Naive thymus-derived CD4-positive, alpha-beta T cell (primary cell): ENCODE measurements at regions of chr2 and their contacts with region 1.

Region 1: GRCh38 chr2:135709992-135710391 is 31.7 kb upstream of the UBXN4 start:
- DNase-seq: peak; percentile 37 to 82 (median 69)
- ATAC-seq: peak; percentile 80
- H3K4me3 ChIP-seq: no peak overlapping the region
- H3K4me3 Mint-ChIP-seq: no peak overlapping the region
- H3K27ac ChIP-seq: no peak overlapping the region
- H3K27ac Mint-ChIP-seq: peak overlapping the region in 2 of 9 donors; percentile 3 to 16
- H3K4me1 ChIP-seq: no peaks in the 10 kb centered on the region
- H3K4me1 Mint-ChIP-seq: peaks cover 0 to 4% (median 0%) of the 10 kb centered on the region in 7 donors
- H3K27me3 ChIP-seq: no peaks in the 10 kb centered on the region
- H3K27me3 Mint-ChIP-seq: no peaks in the 10 kb centered on the region

Region 2: GRCh38 chr2:134988994-134989605 is 720.9 kb before region 1 on chr2:
- CTCF ChIA-PET with region 1: interaction called, 18 read pairs
- POLR2A ChIA-PET with region 1: interaction called, 3 read pairs
- intact Hi-C with region 1: loop called (anchors 1 to 5 kb)
- DNase-seq: peak in 5 of 9 donors; percentile 13 to 35 (median 23)
- ATAC-seq: no peak
- H3K4me3 ChIP-seq: no peak overlapping the region
- H3K4me3 Mint-ChIP-seq: no peak overlapping the region
- H3K27ac ChIP-seq: no peak overlapping the region
- H3K27ac Mint-ChIP-seq: no peak overlapping the region
- H3K4me1 ChIP-seq: no peaks in the 10 kb centered on the region
- H3K4me1 Mint-ChIP-seq: no peaks in the 10 kb centered on the region
- H3K27me3 ChIP-seq: no peaks in the 10 kb centered on the region
- H3K27me3 Mint-ChIP-seq: peaks cover 0 to 22% (median 14%) of the 10 kb centered on the region in 5 donors

Region 3: GRCh38 chr2:135149251-135149650 is 560.7 kb before region 1 on chr2:
- CTCF ChIA-PET with region 1: no interaction called
- POLR2A ChIA-PET with region 1: no interaction called
- intact Hi-C with region 1: loop called in 1 of 2 experiments (anchors 10 kb)
- DNase-seq: no peak
- ATAC-seq: no peak
- H3K4me3 ChIP-seq: no peak overlapping the region
- H3K4me3 Mint-ChIP-seq: no peak overlapping the region
- H3K27ac ChIP-seq: no peak overlapping the region
- H3K27ac Mint-ChIP-seq: peak overlapping the region in 1 of 9 donors; percentile 55
- H3K4me1 ChIP-seq: no peaks in the 10 kb centered on the region
- H3K4me1 Mint-ChIP-seq: peaks cover 5 to 26% (median 21%) of the 10 kb centered on the region in 7 donors
- H3K27me3 ChIP-seq: no peaks in the 10 kb centered on the region
- H3K27me3 Mint-ChIP-seq: no peaks in the 10 kb centered on the region

Region 4: DNA sequence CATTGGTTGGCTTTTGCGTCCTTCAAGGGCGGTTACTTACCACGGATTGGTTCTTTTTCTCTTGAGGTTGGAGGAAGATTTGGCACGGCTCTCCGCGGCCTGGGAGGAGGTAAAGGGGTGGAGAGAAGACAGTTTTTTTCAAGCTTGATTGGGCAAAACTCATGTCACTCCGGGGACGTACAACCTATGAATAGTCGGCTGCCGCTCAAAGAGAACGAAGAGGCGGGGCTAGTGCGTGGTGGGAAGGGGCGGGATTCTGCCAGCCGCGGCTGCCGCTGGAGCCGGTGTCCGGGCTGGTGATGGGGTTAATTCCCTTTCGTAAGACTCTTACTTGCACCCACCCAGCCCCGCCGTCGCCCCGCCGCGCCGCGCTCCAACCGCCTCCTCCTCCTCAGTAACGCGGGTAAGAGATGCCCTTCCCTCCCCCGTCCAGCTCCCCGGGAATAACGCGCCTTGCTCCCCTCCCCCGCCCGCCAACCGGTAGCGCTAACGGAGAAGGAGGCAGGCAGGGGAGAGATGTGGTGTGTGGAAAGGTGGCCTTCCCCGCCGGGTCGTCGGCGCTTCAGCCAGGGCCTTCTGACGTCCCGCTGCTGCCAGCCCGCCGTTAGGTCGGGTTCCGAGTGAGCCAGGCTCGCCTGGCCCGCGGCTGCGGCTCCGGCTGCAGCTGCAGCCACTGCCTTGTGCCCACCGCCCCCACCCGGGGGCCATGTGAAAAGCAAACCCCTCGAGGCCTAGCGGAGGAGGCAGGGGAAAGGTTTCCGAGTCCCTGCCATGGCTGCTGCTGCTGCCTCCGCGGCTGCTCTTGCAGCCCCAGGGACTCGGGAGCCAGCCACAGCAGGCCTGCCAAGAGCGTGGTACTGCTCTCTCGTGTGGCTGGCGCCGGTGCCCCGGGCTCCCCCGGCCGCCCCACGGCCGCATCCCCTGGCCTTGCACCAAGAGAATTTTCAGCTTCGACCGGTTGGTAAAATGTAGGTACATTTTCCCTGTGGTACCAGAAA is 178.5 kb before region 1 on chr2 and contains the start of gene R3HDM1:
- CTCF ChIA-PET with region 1: no interaction called
- POLR2A ChIA-PET with region 1: no interaction called
- intact Hi-C with region 1: loop called (anchors 1 kb)
- DNase-seq: peak in 8 of 9 donors; percentile 71 to 99 (median 98)
- ATAC-seq: peak; percentile 89
- H3K4me3 ChIP-seq: peak within 1 kb of the TSS; percentile 83
- H3K4me3 Mint-ChIP-seq: no peak within 1 kb of the TSS
- H3K27ac ChIP-seq: peak within 1 kb of the TSS; percentile 84
- H3K27ac Mint-ChIP-seq: peak within 1 kb of the TSS in 7 of 9 donors; percentile 36 to 81 (median 67)
- H3K4me1 ChIP-seq: peaks cover 4 to 21% of the 10 kb centered on the region in 2 donors
- H3K4me1 Mint-ChIP-seq: peaks cover 10 to 39% (median 34%) of the 10 kb centered on the region in 7 donors
- H3K27me3 ChIP-seq: no peaks in the 10 kb centered on the region
- H3K27me3 Mint-ChIP-seq: no peaks in the 10 kb centered on the region
- total RNA-seq, gene R3HDM1: 35.0 to 58.2 (median 47.0) TPM

Region 5: GRCh38 chr2:135637456-135638087 is 72.4 kb before region 1 on chr2:
- CTCF ChIA-PET with region 1: interaction called, 3 read pairs
- POLR2A ChIA-PET with region 1: no interaction called
- intact Hi-C with region 1: loop called in 1 of 2 experiments (anchors 5 kb)
- DNase-seq: no peak
- ATAC-seq: no peak
- H3K4me3 ChIP-seq: no peak overlapping the region
- H3K4me3 Mint-ChIP-seq: no peak overlapping the region
- H3K27ac ChIP-seq: no peak overlapping the region
- H3K27ac Mint-ChIP-seq: no peak overlapping the region
- H3K4me1 ChIP-seq: no peaks in the 10 kb centered on the region
- H3K4me1 Mint-ChIP-seq: peaks cover 0 to 4% (median 0%) of the 10 kb centered on the region in 7 donors
- H3K27me3 ChIP-seq: no peaks in the 10 kb centered on the region
- H3K27me3 Mint-ChIP-seq: no peaks in the 10 kb centered on the region

Region 6: DNA sequence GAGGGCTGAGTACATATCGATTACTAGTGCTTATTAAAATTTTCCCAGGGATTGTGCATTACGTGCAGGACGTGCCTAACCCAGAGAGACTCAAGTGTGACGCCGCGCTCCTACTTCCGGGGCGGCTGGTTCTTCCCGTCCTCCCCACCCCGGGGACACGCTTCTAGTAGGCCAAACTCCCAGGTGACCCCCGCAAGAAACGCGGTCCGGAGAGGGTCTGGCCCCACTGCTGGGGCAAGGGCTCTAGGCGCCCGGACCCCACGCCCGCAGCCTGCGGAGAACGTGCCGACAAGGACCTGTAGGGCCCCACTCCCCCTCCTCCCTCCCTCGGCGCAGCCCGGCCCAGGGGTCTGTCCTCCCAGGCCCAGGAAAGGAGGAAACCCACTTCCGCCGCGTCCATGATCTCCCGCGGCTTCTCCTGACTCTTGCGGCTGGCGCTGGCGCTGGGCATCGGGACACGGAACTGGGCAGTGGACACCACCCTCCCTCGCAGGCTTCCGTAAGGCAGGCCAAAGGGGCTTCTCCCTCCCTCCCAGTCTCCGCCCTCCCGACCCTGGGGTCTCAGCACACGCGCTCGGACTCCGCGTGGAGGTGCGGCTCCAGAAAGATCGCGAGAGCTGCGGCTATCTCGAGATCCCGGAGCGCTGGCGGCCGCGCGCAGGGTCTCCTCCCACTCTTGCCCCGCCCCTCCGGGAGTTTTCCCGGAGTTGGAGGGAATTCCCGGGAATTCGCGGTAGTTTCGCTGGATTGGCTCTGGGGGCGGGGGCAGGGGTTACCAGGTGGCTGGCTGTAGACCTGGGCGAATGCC is 275.2 kb after region 1 on chr2 and contains the start of gene DARS1:
- CTCF ChIA-PET with region 1: no interaction called
- POLR2A ChIA-PET with region 1: no interaction called
- intact Hi-C with region 1: no loop called
- DNase-seq: peak; percentile 67 to 89 (median 78)
- ATAC-seq: peak; percentile 92
- H3K4me3 ChIP-seq: peak within 1 kb of the TSS; percentile 82
- H3K4me3 Mint-ChIP-seq: peak within 1 kb of the TSS; percentile 90 to 99 (median 97)
- H3K27ac ChIP-seq: peak within 1 kb of the TSS; percentile 95
- H3K27ac Mint-ChIP-seq: peak within 1 kb of the TSS; percentile 98 to 99 (median 98)
- H3K4me1 ChIP-seq: peaks cover 0 to 24% of the 10 kb centered on the region in 2 donors
- H3K4me1 Mint-ChIP-seq: peaks cover 9 to 66% (median 54%) of the 10 kb centered on the region in 7 donors
- H3K27me3 ChIP-seq: no peaks in the 10 kb centered on the region
- H3K27me3 Mint-ChIP-seq: no peaks in the 10 kb centered on the region
- total RNA-seq, gene DARS1: 45.3 to 140 (median 63.4) TPM